Activated B cell treated with CpG ODN at 0.5 μM for 24 hours (primary cell): ENCODE measurements at regions of chr18 and their contacts with region 1.

Region 1: GRCh38 chr18:55322178-55322735 is 265.7 kb downstream of the TCF4 start:
- DNase-seq: peak; percentile 60
- ATAC-seq: peak; percentile 62
- H3K4me3 Mint-ChIP-seq: peak overlapping the region; percentile 90
- H3K27ac Mint-ChIP-seq: peak overlapping the region; percentile 92
- H3K4me1 Mint-ChIP-seq: peaks cover 63% of the 10 kb centered on the region
- H3K27me3 Mint-ChIP-seq: no peaks in the 10 kb centered on the region
- CTCF ChIP-seq: no peak

Region 2: GRCh38 chr18:54261894-54262293 is 1060.4 kb before region 1 on chr18:
- CTCF ChIA-PET with region 1: no interaction called
- POLR2A ChIA-PET with region 1: no interaction called
- intact Hi-C with region 1: loop called (anchors 2 kb)
- DNase-seq: no peak
- ATAC-seq: peak; percentile 81
- H3K4me3 Mint-ChIP-seq: peak overlapping the region; percentile 67
- H3K27ac Mint-ChIP-seq: peak overlapping the region; percentile 93
- H3K4me1 Mint-ChIP-seq: peaks cover 60% of the 10 kb centered on the region
- H3K27me3 Mint-ChIP-seq: no peaks in the 10 kb centered on the region
- CTCF ChIP-seq: no peak

Region 3: DNA sequence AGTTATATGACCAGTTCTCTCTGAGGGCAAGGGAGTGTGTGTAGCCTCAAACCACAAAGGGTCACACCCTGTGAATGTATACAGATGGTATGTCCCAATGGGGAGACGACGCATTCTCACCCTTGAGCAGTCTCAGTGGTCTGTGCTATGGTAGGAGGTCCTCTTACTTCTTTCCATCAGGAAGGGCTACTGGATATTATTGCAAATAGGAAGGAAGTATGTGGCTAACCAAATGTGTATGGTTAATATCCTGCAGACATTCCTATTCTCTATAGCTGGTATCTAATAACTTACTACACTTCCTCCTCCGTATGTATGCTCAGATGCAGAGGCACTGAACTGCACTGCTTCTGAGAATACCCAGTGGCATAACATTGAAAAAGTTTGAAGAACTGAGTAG is 56.3 kb before region 1 on chr18:
- CTCF ChIA-PET with region 1: interaction called, 4 read pairs
- POLR2A ChIA-PET with region 1: interaction called, 48 read pairs
- intact Hi-C with region 1: loop called (anchors 1 kb)
- DNase-seq: no peak
- ATAC-seq: peak; percentile 38
- H3K4me3 Mint-ChIP-seq: peak overlapping the region; percentile 44
- H3K27ac Mint-ChIP-seq: peak overlapping the region; percentile 93
- H3K4me1 Mint-ChIP-seq: peaks cover 73% of the 10 kb centered on the region
- H3K27me3 Mint-ChIP-seq: no peaks in the 10 kb centered on the region
- CTCF ChIP-seq: no peak

Region 4: GRCh38 chr18:55337908-55338521 is 15.8 kb after region 1 on chr18:
- CTCF ChIA-PET with region 1: interaction called, 4 read pairs
- POLR2A ChIA-PET with region 1: interaction called, 13 read pairs
- intact Hi-C with region 1: loop called (anchors 2 kb)
- DNase-seq: peak; percentile 24
- ATAC-seq: peak; percentile 81
- H3K4me3 Mint-ChIP-seq: peak overlapping the region; percentile 76
- H3K27ac Mint-ChIP-seq: peak overlapping the region; percentile 81
- H3K4me1 Mint-ChIP-seq: peaks cover 35% of the 10 kb centered on the region
- H3K27me3 Mint-ChIP-seq: no peaks in the 10 kb centered on the region
- CTCF ChIP-seq: no peak

Region 5: GRCh38 chr18:55477499-55477859 is 155.2 kb after region 1 on chr18:
- CTCF ChIA-PET with region 1: no interaction called
- POLR2A ChIA-PET with region 1: no interaction called
- intact Hi-C with region 1: loop called (anchors 5 kb)
- DNase-seq: peak; percentile 23
- ATAC-seq: peak; percentile 94
- H3K4me3 Mint-ChIP-seq: peak overlapping the region; percentile 97
- H3K27ac Mint-ChIP-seq: peak overlapping the region; percentile 93
- H3K4me1 Mint-ChIP-seq: peaks cover 21% of the 10 kb centered on the region
- H3K27me3 Mint-ChIP-seq: no peaks in the 10 kb centered on the region
- CTCF ChIP-seq: no peak

Region 6: GRCh38 chr18:56267334-56267733 is 945.1 kb after region 1 on chr18:
- CTCF ChIA-PET with region 1: no interaction called
- POLR2A ChIA-PET with region 1: interaction called, 11 read pairs
- intact Hi-C with region 1: no loop called
- DNase-seq: peak; percentile 22
- ATAC-seq: peak; percentile 96
- H3K4me3 Mint-ChIP-seq: peak overlapping the region; percentile 74
- H3K27ac Mint-ChIP-seq: peak overlapping the region; percentile 53
- H3K4me1 Mint-ChIP-seq: peaks cover 45% of the 10 kb centered on the region
- H3K27me3 Mint-ChIP-seq: no peaks in the 10 kb centered on the region
- CTCF ChIP-seq: no peak